SK-N-SH (cell line): ENCODE measurements at regions of chr1 and their contacts with region 1.

Region 1: GRCh38 chr1:209248649-209249279 is 334.8 kb upstream of the CAMK1G start:
- DNase-seq: peak; percentile 53
- H3K4me3 ChIP-seq: peak overlapping the region in 1 of 2 experiments; percentile 22; a peak in 1 of 4 replicates
- H3K27ac ChIP-seq: peak overlapping the region; percentile 41 to 98; a peak in 3 of 4 replicates
- H3K4me1 ChIP-seq: peaks cover 0 to 50% of the 10 kb centered on the region in 2 experiments; a peak in 2 of 4 replicates
- H3K27me3 ChIP-seq: no peaks in the 10 kb centered on the region
- CTCF ChIP-seq: peak; percentile 95
- EP300 ChIP-seq: no peak
- RAD21 ChIP-seq: peak; percentile 93

Region 2: GRCh38 chr1:208919371-208919770 is 329.4 kb before region 1 on chr1:
- CTCF ChIA-PET with region 1: no interaction called
- POLR2A ChIA-PET with region 1: no interaction called
- DNase-seq: no peak
- H3K4me3 ChIP-seq: no peak overlapping the region
- H3K27ac ChIP-seq: no peak overlapping the region
- H3K4me1 ChIP-seq: no peaks in the 10 kb centered on the region; a peak in 1 of 4 replicates
- H3K27me3 ChIP-seq: no peaks in the 10 kb centered on the region
- CTCF ChIP-seq: no peak
- EP300 ChIP-seq: no peak
- RAD21 ChIP-seq: no peak

Region 3: GRCh38 chr1:209095627-209096595 is 152.9 kb before region 1 on chr1:
- CTCF ChIA-PET with region 1: no interaction called
- POLR2A ChIA-PET with region 1: no interaction called
- DNase-seq: no peak
- H3K4me3 ChIP-seq: no peak overlapping the region
- H3K27ac ChIP-seq: peak overlapping the region; percentile 74 to 92
- H3K4me1 ChIP-seq: peaks cover 7% of the 10 kb centered on the region in 2 experiments
- H3K27me3 ChIP-seq: no peaks in the 10 kb centered on the region
- CTCF ChIP-seq: no peak
- EP300 ChIP-seq: peak; percentile 62 to 94
- RAD21 ChIP-seq: no peak

Region 4: DNA sequence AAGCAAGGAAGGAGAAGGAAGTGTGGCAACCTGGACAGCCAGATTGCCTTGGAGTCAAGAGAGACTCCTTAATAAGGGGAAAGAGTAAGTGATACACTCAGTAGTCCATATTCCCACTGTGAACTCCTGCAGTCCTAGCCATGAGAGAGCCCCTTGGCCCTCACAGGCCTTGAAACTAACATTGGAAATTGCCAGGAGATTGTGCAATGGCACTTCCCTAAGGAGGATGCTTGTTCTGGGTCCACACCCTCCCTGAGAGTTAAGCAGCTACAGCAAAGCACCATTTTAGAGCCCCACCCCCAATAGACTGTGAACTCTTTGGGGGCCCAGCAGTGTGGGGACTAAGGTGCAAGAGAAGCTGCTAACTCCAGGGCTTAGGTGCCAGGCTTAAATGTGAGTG is 32.9 kb before region 1 on chr1:
- CTCF ChIA-PET with region 1: interaction called, 261 read pairs
- POLR2A ChIA-PET with region 1: no interaction called
- DNase-seq: no peak
- H3K4me3 ChIP-seq: no peak overlapping the region
- H3K27ac ChIP-seq: no peak overlapping the region
- H3K4me1 ChIP-seq: peaks cover 0 to 30% of the 10 kb centered on the region in 2 experiments; a peak in 2 of 4 replicates
- H3K27me3 ChIP-seq: no peaks in the 10 kb centered on the region
- CTCF ChIP-seq: no peak
- EP300 ChIP-seq: no peak
- RAD21 ChIP-seq: no peak

Region 5: GRCh38 chr1:209235166-209235565 is 13.6 kb before region 1 on chr1:
- CTCF ChIA-PET with region 1: interaction called, 23 read pairs
- POLR2A ChIA-PET with region 1: no interaction called
- DNase-seq: no peak
- H3K4me3 ChIP-seq: no peak overlapping the region
- H3K27ac ChIP-seq: no peak overlapping the region
- H3K4me1 ChIP-seq: no peaks in the 10 kb centered on the region
- H3K27me3 ChIP-seq: no peaks in the 10 kb centered on the region
- CTCF ChIP-seq: no peak
- EP300 ChIP-seq: no peak
- RAD21 ChIP-seq: no peak

Region 6: GRCh38 chr1:209335178-209335577 is 86.4 kb after region 1 on chr1:
- CTCF ChIA-PET with region 1: interaction called, 17 read pairs
- POLR2A ChIA-PET with region 1: no interaction called
- DNase-seq: peak; percentile 59
- H3K4me3 ChIP-seq: no peak overlapping the region
- H3K27ac ChIP-seq: no peak overlapping the region
- H3K4me1 ChIP-seq: no peaks in the 10 kb centered on the region; a peak in 2 of 4 replicates
- H3K27me3 ChIP-seq: no peaks in the 10 kb centered on the region
- CTCF ChIP-seq: peak; percentile 82
- EP300 ChIP-seq: no peak
- RAD21 ChIP-seq: peak; percentile 50

Region 7: GRCh38 chr1:209402697-209403096 is 153.9 kb after region 1 on chr1:
- CTCF ChIA-PET with region 1: no interaction called
- POLR2A ChIA-PET with region 1: no interaction called
- DNase-seq: no peak
- H3K4me3 ChIP-seq: no peak overlapping the region
- H3K27ac ChIP-seq: no peak overlapping the region
- H3K4me1 ChIP-seq: peaks cover 19% of the 10 kb centered on the region in 2 experiments; a peak in 3 of 4 replicates
- H3K27me3 ChIP-seq: no peaks in the 10 kb centered on the region
- CTCF ChIP-seq: no peak
- EP300 ChIP-seq: no peak
- RAD21 ChIP-seq: no peak

Region 8: GRCh38 chr1:209435654-209436566 is 187.1 kb after region 1 on chr1:
- CTCF ChIA-PET with region 1: interaction called, 40 read pairs
- POLR2A ChIA-PET with region 1: no interaction called
- DNase-seq: peak; percentile 86
- H3K4me3 ChIP-seq: no peak overlapping the region; a peak in 1 of 4 replicates
- H3K27ac ChIP-seq: peak overlapping the region in 1 of 2 experiments; percentile 47; a peak in 2 of 4 replicates
- H3K4me1 ChIP-seq: peaks cover 7 to 15% of the 10 kb centered on the region in 2 experiments; a peak in 3 of 4 replicates
- H3K27me3 ChIP-seq: no peaks in the 10 kb centered on the region
- CTCF ChIP-seq: peak; percentile 96
- EP300 ChIP-seq: no peak
- RAD21 ChIP-seq: peak; percentile 96